Right ventricle myocardium inferior (tissue), 1 donor: ENCODE measurements at regions of chr2 and their contacts with region 1.

Region 1: DNA sequence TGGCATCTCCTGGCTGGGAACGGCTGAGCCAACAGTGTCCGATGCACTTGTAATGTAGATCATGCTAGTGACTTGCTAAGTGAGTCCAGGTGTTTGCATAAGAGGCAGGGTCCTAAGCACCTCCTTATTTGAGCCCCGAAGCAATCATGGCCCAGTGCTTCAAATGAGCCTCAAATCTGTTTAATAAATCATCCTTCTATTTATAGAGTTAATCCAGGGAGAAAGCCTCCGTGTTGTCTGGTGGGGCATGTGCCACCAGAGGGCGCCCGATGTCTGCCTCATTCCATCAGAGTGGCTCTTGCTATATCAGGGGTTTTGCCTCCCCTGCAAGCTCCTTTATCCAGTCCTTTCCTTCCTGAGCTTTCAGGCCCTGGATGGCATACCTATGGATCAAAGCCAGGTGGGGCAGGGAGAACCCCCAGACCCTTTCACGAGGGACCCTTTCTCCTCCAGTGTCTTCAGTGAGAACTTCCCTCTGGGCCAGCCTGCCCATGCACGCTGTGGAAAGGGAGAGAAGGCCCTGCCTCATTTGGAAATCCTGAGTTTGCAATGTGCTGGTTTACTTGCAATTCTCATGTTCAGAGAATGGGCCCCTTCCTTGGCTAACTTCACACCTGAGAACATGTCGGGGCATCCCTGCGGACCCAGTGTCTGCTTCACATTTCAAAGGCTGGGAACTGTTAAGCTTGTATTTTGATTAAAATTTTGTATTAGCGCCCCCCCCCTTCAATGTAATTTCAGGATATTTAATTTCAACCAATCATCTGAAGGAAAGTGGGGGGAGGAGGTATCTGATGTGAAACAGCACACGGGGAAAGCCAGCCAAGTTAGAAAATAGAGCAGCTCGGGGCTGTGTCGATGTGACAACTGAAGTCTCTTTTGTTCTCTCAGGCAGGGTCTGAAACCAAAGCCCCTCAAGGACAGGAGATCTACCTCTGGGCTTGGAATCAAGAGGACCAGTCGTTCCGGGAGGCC is 39.7 kb downstream of the RDH14 start:
- DNase-seq: peak; percentile 90
- ATAC-seq: peak; percentile 86

Region 2: DNA sequence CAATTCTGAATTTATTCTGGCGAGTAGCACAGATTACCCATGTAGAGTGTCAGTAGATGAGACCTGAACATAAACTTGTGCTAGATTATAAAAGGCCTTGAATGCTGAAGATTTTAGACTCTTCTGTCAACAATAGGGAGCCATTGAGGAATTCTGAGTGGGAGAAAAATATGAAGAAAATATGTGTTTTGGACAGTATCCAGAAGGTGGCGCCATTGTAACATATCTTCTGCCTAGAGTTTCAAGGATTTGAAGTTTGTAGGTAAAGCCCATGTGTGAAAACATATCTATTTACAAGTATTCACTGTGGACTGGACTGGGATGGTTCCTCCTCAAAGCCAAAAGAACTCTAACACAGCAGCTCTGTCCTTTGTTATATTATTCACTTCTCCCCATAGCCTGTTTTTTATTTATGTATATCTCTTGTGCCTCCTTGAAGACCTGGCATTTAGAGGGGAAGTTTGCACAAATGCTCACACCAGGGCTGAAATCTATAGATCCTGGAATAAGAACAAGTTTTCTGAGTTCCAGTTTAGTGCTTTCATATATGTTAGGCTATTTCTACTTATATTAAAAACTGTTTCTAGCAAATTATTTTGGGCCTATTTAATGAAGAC is 85.2 kb before region 1 on chr2:
- intact Hi-C with region 1: loop called (anchors 10 kb)
- DNase-seq: no peak
- ATAC-seq: peak; percentile 43

Region 3: DNA sequence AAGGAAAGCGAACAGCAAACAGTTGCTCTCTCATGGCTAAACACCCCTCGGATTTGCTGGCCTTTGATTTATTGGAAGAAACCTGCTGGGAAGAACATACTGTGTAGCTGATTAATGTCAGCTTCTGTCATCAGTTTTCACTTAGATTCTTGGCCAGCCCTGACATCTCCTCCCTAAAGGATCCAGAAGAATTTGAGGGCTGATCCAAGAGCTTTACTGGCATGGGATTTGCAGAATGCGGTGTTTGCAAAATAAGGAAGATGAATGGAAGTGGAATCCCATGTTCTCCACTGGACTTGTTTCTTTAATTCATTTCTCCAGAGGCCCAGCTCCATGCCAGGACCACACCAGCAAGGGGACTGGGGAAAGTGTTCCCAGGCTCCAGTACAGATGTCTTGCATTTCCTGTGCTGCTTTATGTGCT is 40.8 kb before region 1 on chr2:
- intact Hi-C with region 1: no loop called
- DNase-seq: peak; percentile 69
- ATAC-seq: peak; percentile 87

Region 4: GRCh38 chr2:18546567-18546966 is 25.8 kb after region 1 on chr2:
- intact Hi-C with region 1: no loop called
- DNase-seq: no peak
- ATAC-seq: no peak

Region 5: DNA sequence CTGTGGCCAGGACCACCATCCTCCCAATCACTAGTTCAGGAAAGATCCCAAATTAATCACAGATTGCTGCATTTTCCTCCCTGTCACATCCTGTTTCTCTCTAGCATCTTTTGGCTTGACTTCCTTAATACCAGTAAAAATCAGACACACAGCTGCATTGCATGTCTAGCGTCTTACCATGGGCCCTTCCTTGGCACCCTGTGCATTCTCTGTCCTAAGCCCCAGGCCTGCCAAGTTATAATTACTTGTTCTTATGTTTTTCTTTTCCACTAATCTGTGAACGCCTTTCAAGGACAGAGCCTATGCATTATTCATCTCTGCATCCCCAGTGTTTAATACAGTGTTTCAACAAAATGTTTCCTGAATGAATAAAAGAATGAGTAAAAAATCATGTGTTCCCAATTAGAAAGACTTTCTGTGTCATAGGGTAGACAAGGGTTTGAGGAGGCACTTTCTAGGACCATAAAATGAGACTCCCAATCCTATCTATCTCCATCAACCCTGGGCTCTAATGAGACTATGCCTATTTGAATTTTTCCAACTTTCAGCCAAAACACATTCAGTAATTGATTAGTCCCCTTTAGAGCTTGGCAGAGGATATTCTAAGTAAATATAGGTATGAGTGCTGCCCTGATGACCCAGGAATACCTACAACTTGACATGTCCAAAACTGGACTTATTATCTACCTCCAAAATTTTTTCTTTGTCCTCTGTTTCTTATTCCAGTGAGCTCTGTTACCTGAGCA is 78.9 kb after region 1 on chr2:
- intact Hi-C with region 1: loop called (anchors 5 kb)
- DNase-seq: no peak
- ATAC-seq: peak; percentile 39

Region 6: DNA sequence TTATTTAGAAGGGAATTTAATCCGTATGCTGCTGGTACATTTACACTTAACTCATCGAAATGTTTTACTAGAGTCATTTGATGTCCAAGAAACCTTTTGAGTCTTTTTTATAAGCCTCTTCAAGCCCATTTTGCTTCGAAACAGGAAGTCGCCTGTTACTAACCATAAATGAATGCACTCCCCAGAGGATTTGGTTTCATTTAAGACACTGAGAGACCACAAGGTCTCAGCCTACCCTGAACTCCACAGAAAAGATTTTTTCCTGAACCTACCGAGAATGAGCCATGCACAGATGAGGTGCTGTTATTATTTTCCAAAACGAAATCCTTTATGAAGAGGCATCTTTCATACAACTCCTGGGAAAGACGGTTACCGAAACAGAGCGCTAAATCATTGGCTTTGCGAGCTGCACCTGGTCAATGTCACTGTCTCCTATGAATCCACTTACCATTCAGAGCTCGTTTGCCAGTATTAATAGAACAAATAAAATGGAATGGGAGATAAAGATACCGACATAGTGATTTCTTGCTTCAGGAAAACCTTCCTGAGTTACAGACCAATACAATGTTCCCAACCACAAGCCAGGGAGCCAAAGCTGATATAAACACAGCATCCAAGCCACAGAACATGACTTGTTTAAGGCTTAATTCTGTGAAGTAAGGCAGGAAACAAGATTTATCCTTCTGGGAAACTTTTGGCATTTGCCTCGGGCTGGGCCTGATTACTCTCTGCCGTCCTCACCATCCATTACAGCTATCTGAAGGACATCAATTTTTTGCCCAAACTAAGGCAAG is 455.6 kb after region 1 on chr2:
- intact Hi-C with region 1: loop called (anchors 10 kb)
- DNase-seq: no peak
- ATAC-seq: peak; percentile 59

Region 7: DNA sequence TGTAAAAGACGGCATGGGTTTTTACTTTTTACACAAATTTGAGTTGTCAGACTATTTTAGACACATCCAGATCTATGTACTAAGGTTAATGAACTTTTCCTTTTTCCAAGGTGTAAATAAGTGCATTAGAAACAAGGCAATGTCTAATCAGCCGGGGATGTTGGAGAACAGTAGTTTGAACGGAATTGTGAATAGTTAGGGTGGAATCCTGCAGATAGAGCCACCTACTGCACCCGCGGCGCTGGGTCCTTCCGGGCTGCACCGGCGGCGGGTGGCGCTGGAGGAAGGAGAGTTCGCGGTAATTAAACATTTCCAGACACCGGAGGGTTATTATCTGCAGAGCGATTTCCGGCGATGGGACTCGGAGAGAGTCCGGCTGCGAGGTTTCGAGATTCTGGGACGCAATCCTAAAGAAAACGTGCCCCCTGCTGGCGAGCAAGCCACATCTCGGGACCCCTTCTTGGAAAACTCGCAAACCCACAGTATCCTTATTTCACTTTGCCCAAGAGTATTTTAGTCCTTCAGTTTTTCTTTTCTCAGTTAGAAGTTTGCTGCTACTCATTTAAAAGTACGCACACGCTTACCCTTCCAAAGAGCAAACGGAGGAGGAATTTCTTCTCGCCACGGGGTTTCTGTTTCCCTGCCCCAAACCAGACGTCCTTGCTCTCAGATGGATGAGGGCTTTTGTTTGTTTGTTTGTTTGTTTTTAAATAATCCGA is 842.2 kb after region 1 on chr2:
- intact Hi-C with region 1: loop called (anchors 1 kb)
- DNase-seq: peak; percentile 84
- ATAC-seq: peak; percentile 63

Region 8: DNA sequence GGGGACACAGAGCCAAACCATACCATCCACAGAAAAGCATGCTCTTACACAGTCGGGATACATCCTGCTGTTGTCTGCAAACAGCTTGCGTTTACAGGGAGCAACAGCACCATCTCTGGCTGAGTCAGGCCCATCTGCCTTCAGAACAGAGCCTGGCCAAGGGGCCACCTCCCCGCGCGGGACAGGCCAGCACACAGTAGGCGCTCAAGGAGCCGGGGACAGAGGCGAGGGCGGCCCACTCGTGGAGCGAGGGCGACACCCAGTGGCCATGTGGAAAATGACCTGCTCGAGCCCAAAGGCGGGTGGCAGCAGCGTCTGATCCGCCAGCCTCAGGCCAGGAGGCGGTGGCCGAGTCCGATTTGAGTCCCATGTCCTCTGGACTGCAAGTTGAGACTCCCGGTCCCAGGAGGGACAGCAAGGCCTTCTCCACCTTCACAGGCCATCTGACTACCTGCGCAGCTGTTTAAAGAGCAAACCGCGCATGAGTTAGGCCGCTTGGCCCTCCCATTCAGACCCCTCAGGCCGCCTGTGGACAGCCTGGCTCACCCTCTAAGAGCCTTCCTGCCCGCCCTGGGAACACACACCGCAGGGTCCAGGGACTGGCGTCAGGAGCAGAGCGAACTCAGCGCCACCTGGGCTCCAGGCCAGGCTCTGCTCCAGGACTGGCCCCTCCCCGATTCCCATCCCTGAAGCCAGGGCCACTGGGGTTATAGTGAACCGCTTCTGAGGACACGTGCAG is 1342.7 kb after region 1 on chr2:
- intact Hi-C with region 1: loop called (anchors 2 kb)
- DNase-seq: peak; percentile 92
- ATAC-seq: peak; percentile 85